Endothelial cell of umbilical vein (primary cell): ENCODE measurements at regions of chr16 and their contacts with region 1.

Region 1: GRCh38 chr16:19583665-19584300 is 28.3 kb downstream of the VPS35L start:
- DNase-seq: peak; percentile 60
- H3K4me3 ChIP-seq: no peak overlapping the region
- H3K27ac ChIP-seq: no peak overlapping the region
- H3K4me1 ChIP-seq: no peaks in the 10 kb centered on the region
- H3K27me3 ChIP-seq: no peaks in the 10 kb centered on the region
- CTCF ChIP-seq: peak; percentile 80 to 81
- POLR2A ChIP-seq: no peak

Region 2: DNA sequence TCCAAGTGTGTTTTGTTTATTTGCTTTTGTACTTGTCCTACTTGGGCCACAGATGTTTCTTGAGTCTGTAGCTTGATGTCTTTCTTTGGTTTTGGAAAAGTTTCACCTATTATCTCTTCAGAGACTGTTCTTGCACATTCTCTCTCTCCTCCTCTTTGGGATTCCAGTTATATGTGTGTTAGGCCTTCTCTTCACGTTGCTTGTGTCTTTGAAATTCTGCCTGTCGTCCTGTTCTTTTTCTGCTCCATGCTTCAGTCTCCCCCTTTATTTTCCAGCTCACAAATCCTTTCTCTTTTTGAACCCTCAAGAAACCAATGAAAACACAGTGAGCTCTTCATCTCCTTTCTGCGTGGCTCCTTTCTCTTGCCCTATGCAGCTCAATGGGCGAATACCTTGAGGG is 20.4 kb before region 1 on chr16:
- CTCF ChIA-PET with region 1: interaction called, 27 read pairs
- POLR2A ChIA-PET with region 1: no interaction called
- dilution Hi-C with region 1: no loop called
- intact Hi-C with region 1: no loop called
- DNase-seq: no peak
- H3K4me3 ChIP-seq: no peak overlapping the region
- H3K27ac ChIP-seq: no peak overlapping the region
- H3K4me1 ChIP-seq: no peaks in the 10 kb centered on the region
- H3K27me3 ChIP-seq: no peaks in the 10 kb centered on the region
- CTCF ChIP-seq: no peak
- POLR2A ChIP-seq: no peak

Region 3: DNA sequence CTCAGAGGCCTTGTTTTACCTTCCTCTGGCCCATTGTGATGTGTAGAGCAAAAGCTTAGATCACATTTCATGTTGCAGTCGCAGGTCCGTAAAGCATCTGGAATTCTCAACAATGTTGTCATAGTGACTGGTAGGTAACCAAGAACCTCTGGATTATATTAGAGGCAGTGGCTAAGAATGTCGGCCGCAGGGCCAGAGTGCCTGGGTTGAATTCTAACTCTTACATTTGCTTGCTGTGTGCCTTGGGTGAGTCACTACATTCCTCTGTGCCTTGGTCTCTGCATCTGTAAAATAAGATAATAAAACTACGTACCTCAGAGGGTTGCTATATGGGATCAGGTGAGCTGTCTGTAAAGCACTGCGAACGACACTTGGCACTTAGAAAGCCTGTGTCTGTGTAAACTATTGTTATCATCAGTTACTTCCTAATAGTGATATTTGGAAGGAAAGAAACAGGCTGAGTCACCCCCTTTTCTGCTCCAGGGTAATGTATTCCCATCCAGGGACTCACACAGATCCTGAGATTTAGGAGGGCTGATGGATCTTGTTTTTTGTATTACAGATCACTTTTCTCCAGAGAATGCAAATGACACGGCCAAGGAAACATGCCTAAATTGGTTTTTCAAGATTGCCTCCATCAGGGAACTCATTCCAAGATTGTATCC is 24.0 kb after region 1 on chr16:
- CTCF ChIA-PET with region 1: interaction called, 131 read pairs
- POLR2A ChIA-PET with region 1: interaction called, 3 read pairs
- dilution Hi-C with region 1: no loop called
- intact Hi-C with region 1: no loop called
- DNase-seq: peak; percentile 41
- H3K4me3 ChIP-seq: no peak overlapping the region
- H3K27ac ChIP-seq: no peak overlapping the region
- H3K4me1 ChIP-seq: peaks cover 16% of the 10 kb centered on the region
- H3K27me3 ChIP-seq: no peaks in the 10 kb centered on the region
- CTCF ChIP-seq: no peak
- POLR2A ChIP-seq: no peak

Region 4: GRCh38 chr16:19728636-19728965 is 144.8 kb after region 1 on chr16:
- CTCF ChIA-PET with region 1: no interaction called
- POLR2A ChIA-PET with region 1: no interaction called
- dilution Hi-C with region 1: no loop called
- intact Hi-C with region 1: no loop called
- DNase-seq: no peak
- H3K4me3 ChIP-seq: no peak overlapping the region
- H3K27ac ChIP-seq: no peak overlapping the region
- H3K4me1 ChIP-seq: no peaks in the 10 kb centered on the region
- H3K27me3 ChIP-seq: no peaks in the 10 kb centered on the region
- CTCF ChIP-seq: no peak
- POLR2A ChIP-seq: no peak